CD4-positive, alpha-beta memory T cell (primary cell): ENCODE measurements at regions of chr16 and their contacts with region 1.

Region 1: GRCh38 chr16:53130159-53131049 is 75.6 kb downstream of the CHD9 start:
- DNase-seq: peak; percentile 95 to 96 (median 96)
- H3K4me3 ChIP-seq: peak overlapping the region; percentile 36 to 64
- H3K4me3 Mint-ChIP-seq: peak overlapping the region; percentile 74 to 91 (median 84)
- H3K27ac ChIP-seq: peak overlapping the region; percentile 55
- H3K27ac Mint-ChIP-seq: peak overlapping the region; percentile 80 to 96 (median 86)
- H3K4me1 ChIP-seq: peaks cover 8% of the 10 kb centered on the region
- H3K4me1 Mint-ChIP-seq: peaks cover 9 to 19% (median 14%) of the 10 kb centered on the region in 4 donors
- H3K27me3 ChIP-seq: no peaks in the 10 kb centered on the region
- H3K27me3 Mint-ChIP-seq: no peaks in the 10 kb centered on the region

Region 2: GRCh38 chr16:52843381-52843780 is 287.0 kb before region 1 on chr16:
- CTCF ChIA-PET with region 1: no interaction called
- POLR2A ChIA-PET with region 1: no interaction called
- intact Hi-C with region 1: no loop called
- DNase-seq: no peak
- H3K4me3 ChIP-seq: no peak overlapping the region
- H3K4me3 Mint-ChIP-seq: no peak overlapping the region
- H3K27ac ChIP-seq: no peak overlapping the region
- H3K27ac Mint-ChIP-seq: no peak overlapping the region
- H3K4me1 ChIP-seq: no peaks in the 10 kb centered on the region
- H3K4me1 Mint-ChIP-seq: no peaks in the 10 kb centered on the region
- H3K27me3 ChIP-seq: no peaks in the 10 kb centered on the region
- H3K27me3 Mint-ChIP-seq: peaks cover 1% of the 10 kb centered on the region in 2 donors

Region 3: DNA sequence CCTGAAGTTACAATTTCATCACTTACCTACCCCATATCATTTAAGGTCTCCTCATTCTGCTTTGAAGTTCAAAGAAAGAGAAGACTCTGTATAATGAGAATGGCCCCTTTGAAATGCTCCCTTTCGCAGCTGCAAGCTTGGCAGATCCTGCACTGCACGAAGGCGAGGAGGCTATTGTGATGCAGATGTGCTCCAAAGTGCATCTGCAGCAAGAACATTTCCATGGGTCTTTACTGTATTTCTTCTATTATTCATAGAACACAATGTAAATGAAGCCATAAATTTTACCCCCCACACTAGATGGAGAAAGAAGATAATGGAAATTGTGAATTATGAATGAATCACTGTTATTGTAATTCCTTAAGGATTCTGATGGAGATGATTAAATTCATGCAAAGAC is 256.4 kb before region 1 on chr16:
- CTCF ChIA-PET with region 1: no interaction called
- POLR2A ChIA-PET with region 1: no interaction called
- intact Hi-C with region 1: no loop called
- DNase-seq: no peak
- H3K4me3 ChIP-seq: no peak overlapping the region
- H3K4me3 Mint-ChIP-seq: no peak overlapping the region
- H3K27ac ChIP-seq: no peak overlapping the region
- H3K27ac Mint-ChIP-seq: no peak overlapping the region
- H3K4me1 ChIP-seq: no peaks in the 10 kb centered on the region
- H3K4me1 Mint-ChIP-seq: no peaks in the 10 kb centered on the region
- H3K27me3 ChIP-seq: no peaks in the 10 kb centered on the region
- H3K27me3 Mint-ChIP-seq: peaks cover 1 to 5% of the 10 kb centered on the region in 2 donors

Region 4: DNA sequence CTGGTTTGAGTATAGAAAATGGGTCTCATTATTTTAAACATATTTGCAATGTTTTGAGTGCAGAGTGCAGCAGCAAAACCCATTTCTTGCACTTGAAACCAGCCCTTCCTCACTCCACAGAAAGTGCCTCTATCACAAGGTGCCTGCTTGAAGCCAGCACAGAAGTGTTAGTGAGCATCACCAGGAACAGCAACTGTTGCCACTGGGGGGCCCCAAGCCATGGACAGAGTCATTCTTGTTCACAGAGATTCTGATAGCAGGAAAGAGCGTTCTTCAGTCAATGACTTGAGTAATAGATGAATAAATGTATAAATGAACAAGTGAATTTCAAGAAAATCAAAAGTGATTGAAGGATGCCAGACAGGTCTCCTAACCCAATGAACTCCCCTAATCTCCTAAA is 123.3 kb before region 1 on chr16:
- CTCF ChIA-PET with region 1: no interaction called
- POLR2A ChIA-PET with region 1: no interaction called
- intact Hi-C with region 1: no loop called
- DNase-seq: no peak
- H3K4me3 ChIP-seq: no peak overlapping the region
- H3K4me3 Mint-ChIP-seq: no peak overlapping the region
- H3K27ac ChIP-seq: no peak overlapping the region
- H3K27ac Mint-ChIP-seq: no peak overlapping the region
- H3K4me1 ChIP-seq: no peaks in the 10 kb centered on the region
- H3K4me1 Mint-ChIP-seq: no peaks in the 10 kb centered on the region
- H3K27me3 ChIP-seq: no peaks in the 10 kb centered on the region
- H3K27me3 Mint-ChIP-seq: peaks cover 11 to 13% of the 10 kb centered on the region in 2 donors

Region 5: DNA sequence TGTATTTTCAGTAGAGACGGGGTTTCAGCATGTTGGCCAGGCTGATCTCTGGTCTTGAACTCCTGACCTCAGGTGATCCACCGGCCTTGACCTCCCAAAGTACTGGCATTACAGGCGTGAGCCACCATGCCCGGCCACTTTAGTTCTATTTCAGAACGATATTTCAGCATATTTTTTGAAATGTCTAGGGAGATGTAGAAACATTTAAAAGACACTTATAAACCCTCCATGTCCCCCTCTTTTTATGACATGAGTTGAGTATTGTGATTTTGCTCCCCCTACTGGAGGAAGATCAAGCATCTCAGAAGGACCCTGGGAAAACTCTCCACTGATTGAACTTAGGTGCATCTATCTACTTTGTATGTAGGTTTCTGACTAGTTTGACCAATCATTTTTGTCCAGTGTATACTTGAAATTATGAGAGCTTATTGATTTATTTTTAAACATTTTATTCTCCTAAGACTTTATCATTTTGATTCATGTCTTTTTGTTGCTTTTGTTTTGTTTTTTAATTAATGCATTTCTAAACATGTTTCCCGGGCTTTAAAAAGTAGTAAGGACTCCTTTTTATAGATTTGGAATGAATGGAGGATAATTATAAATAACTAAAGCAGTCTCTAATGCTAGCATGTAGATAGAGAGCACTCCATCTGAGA is 29.5 kb after region 1 on chr16:
- CTCF ChIA-PET with region 1: interaction called, 9 read pairs
- POLR2A ChIA-PET with region 1: no interaction called
- intact Hi-C with region 1: loop called (anchors 2 kb)
- DNase-seq: peak; percentile 31 to 50 (median 44)
- H3K4me3 ChIP-seq: no peak overlapping the region
- H3K4me3 Mint-ChIP-seq: no peak overlapping the region
- H3K27ac ChIP-seq: no peak overlapping the region
- H3K27ac Mint-ChIP-seq: peak overlapping the region in 3 of 7 donors; percentile 3 to 57 (median 55)
- H3K4me1 ChIP-seq: no peaks in the 10 kb centered on the region
- H3K4me1 Mint-ChIP-seq: peaks cover 0 to 8% (median 6%) of the 10 kb centered on the region in 4 donors
- H3K27me3 ChIP-seq: no peaks in the 10 kb centered on the region
- H3K27me3 Mint-ChIP-seq: no peaks in the 10 kb centered on the region

Region 6: GRCh38 chr16:53291757-53292392 is 161.5 kb after region 1 on chr16:
- CTCF ChIA-PET with region 1: no interaction called
- POLR2A ChIA-PET with region 1: no interaction called
- intact Hi-C with region 1: no loop called
- DNase-seq: no peak
- H3K4me3 ChIP-seq: no peak overlapping the region
- H3K4me3 Mint-ChIP-seq: no peak overlapping the region
- H3K27ac ChIP-seq: no peak overlapping the region
- H3K27ac Mint-ChIP-seq: no peak overlapping the region
- H3K4me1 ChIP-seq: no peaks in the 10 kb centered on the region
- H3K4me1 Mint-ChIP-seq: no peaks in the 10 kb centered on the region
- H3K27me3 ChIP-seq: no peaks in the 10 kb centered on the region
- H3K27me3 Mint-ChIP-seq: no peaks in the 10 kb centered on the region

Region 7: DNA sequence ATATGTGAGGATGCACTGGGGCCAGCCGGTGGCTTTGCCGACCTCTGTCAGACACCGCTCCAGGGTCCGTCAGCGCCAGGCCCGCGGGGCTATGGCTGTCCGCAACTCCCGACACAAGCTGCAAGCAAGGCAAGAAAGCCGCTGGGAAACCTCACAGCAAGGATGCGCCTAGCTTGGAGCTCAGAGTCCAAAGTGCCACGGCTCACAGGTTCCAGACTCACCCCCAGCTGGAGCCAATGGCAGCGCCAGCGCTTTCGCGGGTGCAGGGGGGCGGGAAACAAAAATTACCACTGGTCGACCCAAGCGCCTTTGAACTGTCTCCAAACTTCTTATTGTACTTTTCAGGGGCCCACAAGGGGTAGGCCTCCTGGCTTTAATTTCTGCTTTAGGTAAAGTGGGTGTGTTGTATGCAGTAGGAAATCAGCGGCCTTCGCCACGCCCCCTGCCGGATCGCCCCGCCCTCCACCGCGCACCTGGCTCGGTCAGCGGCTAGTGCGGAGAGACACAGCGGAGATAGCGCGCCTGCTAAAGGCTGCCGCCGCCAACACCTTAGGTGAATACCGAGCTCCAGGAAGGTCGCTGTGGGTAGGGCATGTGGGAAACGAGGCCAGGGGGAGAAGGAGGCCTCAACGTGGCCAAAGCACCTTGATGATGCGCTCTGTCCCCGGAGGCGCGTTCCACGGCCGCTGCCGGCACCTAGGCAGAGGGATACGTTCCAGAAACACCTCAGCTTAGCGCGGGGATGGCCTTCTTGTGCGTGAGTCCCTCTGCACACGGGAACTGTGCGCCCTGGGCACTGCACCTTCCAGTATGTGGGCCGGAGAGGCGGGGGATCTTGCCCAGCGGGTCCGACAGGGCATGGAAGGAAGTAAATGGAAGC is 242.8 kb after region 1 on chr16:
- CTCF ChIA-PET with region 1: no interaction called
- POLR2A ChIA-PET with region 1: no interaction called
- intact Hi-C with region 1: loop called (anchors 5 kb)
- DNase-seq: peak; percentile 74 to 84 (median 81)
- H3K4me3 ChIP-seq: peak overlapping the region; percentile 52 to 59
- H3K4me3 Mint-ChIP-seq: peak overlapping the region in 1 of 8 donors; percentile 87
- H3K27ac ChIP-seq: peak overlapping the region; percentile 27
- H3K27ac Mint-ChIP-seq: peak overlapping the region; percentile 71 to 91 (median 88)
- H3K4me1 ChIP-seq: peaks cover 10% of the 10 kb centered on the region
- H3K4me1 Mint-ChIP-seq: peaks cover 14 to 21% (median 18%) of the 10 kb centered on the region in 4 donors
- H3K27me3 ChIP-seq: no peaks in the 10 kb centered on the region
- H3K27me3 Mint-ChIP-seq: peaks cover 0 to 3% of the 10 kb centered on the region in 2 donors

Region 8: GRCh38 chr16:53509906-53510703 is 379.7 kb after region 1 on chr16:
- CTCF ChIA-PET with region 1: no interaction called
- POLR2A ChIA-PET with region 1: no interaction called
- intact Hi-C with region 1: loop called (anchors 2 kb)
- DNase-seq: peak in 4 of 5 donors; percentile 55 to 60 (median 58)
- H3K4me3 ChIP-seq: peak overlapping the region in 1 of 2 donors; percentile 2
- H3K4me3 Mint-ChIP-seq: peak overlapping the region in 7 of 8 donors; percentile 39 to 75 (median 62)
- H3K27ac ChIP-seq: no peak overlapping the region
- H3K27ac Mint-ChIP-seq: peak overlapping the region in 6 of 7 donors; percentile 17 to 79 (median 60)
- H3K4me1 ChIP-seq: peaks cover 26% of the 10 kb centered on the region
- H3K4me1 Mint-ChIP-seq: peaks cover 26 to 53% (median 39%) of the 10 kb centered on the region in 4 donors
- H3K27me3 ChIP-seq: no peaks in the 10 kb centered on the region
- H3K27me3 Mint-ChIP-seq: no peaks in the 10 kb centered on the region